ENCODE measurements at regions of chr7 and their contacts with region 1.

Region 1: GRCh38 chr7:142587578-142588191 is 161.6 kb upstream of the PRSS1 start:
- DNase-seq: no peak
- H3K4me3 ChIP-seq: no peak overlapping the region
- CTCF ChIP-seq: peak; percentile 71

Region 2: GRCh38 chr7:142400042-142400533 is 187.6 kb before region 1 on chr7:
- CTCF ChIA-PET with region 1: no interaction called
- POLR2A ChIA-PET with region 1: no interaction called
- DNase-seq: no peak
- H3K4me3 ChIP-seq: no peak overlapping the region
- CTCF ChIP-seq: no peak

Region 3: GRCh38 chr7:142496545-142497041 is 91.1 kb before region 1 on chr7:
- CTCF ChIA-PET with region 1: interaction called, 11 read pairs
- POLR2A ChIA-PET with region 1: no interaction called
- DNase-seq: no peak
- H3K4me3 ChIP-seq: no peak overlapping the region
- CTCF ChIP-seq: peak; percentile 73

Region 4: GRCh38 chr7:142523821-142524460 is 63.7 kb before region 1 on chr7:
- CTCF ChIA-PET with region 1: interaction called, 32 read pairs
- POLR2A ChIA-PET with region 1: no interaction called
- DNase-seq: no peak
- H3K4me3 ChIP-seq: no peak overlapping the region
- CTCF ChIP-seq: no peak

Region 5: DNA sequence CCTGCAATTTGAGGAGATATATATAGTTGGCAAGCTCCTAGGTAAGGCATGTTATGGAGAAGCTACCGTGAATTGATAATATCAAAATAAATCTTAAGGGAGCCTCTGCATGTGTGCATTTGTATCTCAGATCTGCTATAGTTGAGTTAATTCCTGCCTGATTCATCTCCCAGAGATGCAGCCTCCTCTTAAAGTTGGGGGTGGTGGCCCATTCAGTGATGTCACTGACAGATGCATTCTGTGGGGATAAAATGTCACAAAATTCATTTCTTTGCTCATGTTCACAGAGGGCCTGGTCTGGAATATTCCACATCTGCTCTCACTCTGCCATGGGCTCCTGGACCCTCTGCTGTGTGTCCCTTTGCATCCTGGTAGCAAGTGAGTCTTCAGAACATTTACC is 24.2 kb before region 1 on chr7:
- CTCF ChIA-PET with region 1: interaction called, 33 read pairs
- POLR2A ChIA-PET with region 1: no interaction called
- DNase-seq: no peak
- H3K4me3 ChIP-seq: no peak overlapping the region
- CTCF ChIP-seq: no peak

Region 6: DNA sequence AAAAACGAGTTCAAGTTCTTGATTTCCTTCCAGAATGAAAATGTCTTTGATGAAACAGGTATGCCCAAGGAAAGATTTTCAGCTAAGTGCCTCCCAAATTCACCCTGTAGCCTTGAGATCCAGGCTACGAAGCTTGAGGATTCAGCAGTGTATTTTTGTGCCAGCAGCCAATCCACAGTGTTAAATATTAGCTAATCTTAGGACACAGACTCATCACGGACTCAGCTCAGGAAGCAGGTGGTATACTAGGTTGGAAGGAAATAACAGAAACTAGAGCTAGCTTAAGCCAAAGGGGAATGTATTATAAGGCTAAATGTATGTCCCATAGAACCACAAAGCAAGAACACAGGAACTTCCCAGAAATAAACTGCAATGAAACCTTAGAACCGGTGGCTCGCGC is 10.6 kb after region 1 on chr7:
- CTCF ChIA-PET with region 1: interaction called, 135 read pairs
- POLR2A ChIA-PET with region 1: no interaction called
- DNase-seq: no peak
- H3K4me3 ChIP-seq: no peak overlapping the region
- CTCF ChIP-seq: no peak

Region 7: GRCh38 chr7:142632291-142633134 is 44.8 kb after region 1 on chr7:
- CTCF ChIA-PET with region 1: interaction called, 12 read pairs
- POLR2A ChIA-PET with region 1: no interaction called
- DNase-seq: no peak
- H3K4me3 ChIP-seq: no peak overlapping the region
- CTCF ChIP-seq: peak; percentile 65

Region 8: DNA sequence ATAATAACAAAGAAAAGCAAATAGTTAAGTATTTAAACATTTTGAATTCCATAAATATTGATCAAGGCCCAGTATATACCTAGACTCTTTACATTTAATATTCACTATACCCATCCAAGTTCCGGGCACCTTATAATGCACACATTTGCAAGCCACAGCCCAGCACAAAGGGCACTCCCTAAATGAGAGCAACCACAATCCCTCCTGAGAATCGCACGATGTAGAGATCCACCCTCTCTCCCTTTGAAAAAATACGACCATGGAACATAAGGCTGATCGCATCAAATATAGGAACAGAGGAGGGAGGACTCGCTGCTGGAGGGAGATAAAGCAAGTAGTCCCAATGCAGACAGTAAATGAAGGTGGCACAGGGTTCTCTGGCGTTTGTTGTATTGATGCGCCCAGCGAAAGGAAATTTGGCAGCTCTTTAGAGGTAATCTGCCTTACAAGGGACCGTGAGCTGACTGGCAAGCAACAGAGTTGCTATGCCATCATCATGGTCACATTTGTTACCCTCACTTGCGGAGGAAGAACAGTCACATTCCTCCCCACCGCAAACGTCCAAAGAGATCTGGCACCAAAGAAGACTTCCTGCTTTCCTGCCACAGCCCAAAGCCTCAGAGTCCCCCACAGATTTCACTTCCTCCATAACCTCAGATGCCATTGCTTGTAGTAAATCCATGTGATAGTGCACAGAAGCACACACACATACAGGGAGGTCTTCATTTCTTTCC is 618.0 kb after region 1 on chr7:
- CTCF ChIA-PET with region 1: no interaction called
- POLR2A ChIA-PET with region 1: no interaction called
- DNase-seq: no peak
- H3K4me3 ChIP-seq: no peak overlapping the region
- CTCF ChIP-seq: no peak

Measured in AG04449 (cell line).